Activated T-helper 2 cell treated with anti-CD3 and anti-CD28 coated beads, Interferon-gamma antibody, Interleukin-2, Interleukin-4, amounts not matched to agents 10 μg/mL and 5 μg/mL and 100 μg/mL, durations not matched to agents 14 hours and 24 hours and 36 hours (primary cell): ENCODE measurements at regions of chr12 and their contacts with region 1.

Region 1: DNA sequence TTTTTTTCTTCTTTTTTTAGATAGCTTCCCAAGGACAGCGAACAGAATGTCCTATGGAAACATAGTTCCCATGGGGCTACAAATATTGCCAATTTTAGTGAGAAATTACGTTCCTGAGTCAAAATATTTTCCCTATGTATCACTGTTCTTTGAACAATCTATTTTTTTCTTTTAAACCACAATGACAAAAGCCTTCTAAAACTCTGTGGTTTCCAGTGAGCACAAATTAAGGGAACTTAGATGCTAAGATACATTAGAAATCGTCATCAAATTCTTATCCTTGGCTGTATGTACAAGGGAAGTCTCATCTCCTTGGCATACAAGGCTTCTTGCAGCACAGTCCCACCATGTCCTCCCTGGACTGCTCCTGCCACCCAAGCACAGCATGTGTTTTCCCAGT is 17.9 kb downstream of the CPM start:
- DNase-seq: no peak
- H3K4me3 Mint-ChIP-seq: no peak overlapping the region
- H3K27ac Mint-ChIP-seq: peak overlapping the region; percentile 79
- H3K4me1 Mint-ChIP-seq: peaks cover 36% of the 10 kb centered on the region
- H3K27me3 Mint-ChIP-seq: no peaks in the 10 kb centered on the region

Region 2: DNA sequence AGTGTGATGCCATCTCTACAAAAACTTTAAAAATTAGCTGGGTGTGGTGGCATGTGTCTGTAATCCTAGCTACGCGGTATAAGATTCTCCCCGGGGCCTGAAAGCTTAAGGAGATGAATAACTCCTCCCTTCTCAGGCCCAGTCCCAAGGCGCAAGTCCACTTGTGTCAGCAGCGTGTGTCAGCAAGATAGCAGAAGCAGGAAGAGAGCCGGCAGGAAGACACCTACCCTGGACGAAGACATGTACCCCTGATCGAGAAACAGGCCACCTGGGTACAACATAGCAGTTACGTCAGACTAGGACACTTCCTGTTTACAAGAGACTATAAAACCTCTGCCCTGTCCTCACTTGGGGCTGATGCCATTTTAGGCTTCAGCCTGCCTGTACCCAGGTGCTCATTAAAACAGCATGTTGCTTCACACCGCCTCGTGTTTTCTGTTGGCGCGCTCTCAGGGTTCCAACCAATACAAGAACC is 25.4 kb before region 1 on chr12:
- intact Hi-C with region 1: loop called (anchors 1 kb)
- DNase-seq: no peak
- H3K4me3 Mint-ChIP-seq: no peak overlapping the region
- H3K27ac Mint-ChIP-seq: peak overlapping the region; percentile 13
- H3K4me1 Mint-ChIP-seq: peaks cover 53% of the 10 kb centered on the region
- H3K27me3 Mint-ChIP-seq: no peaks in the 10 kb centered on the region

Region 3: DNA sequence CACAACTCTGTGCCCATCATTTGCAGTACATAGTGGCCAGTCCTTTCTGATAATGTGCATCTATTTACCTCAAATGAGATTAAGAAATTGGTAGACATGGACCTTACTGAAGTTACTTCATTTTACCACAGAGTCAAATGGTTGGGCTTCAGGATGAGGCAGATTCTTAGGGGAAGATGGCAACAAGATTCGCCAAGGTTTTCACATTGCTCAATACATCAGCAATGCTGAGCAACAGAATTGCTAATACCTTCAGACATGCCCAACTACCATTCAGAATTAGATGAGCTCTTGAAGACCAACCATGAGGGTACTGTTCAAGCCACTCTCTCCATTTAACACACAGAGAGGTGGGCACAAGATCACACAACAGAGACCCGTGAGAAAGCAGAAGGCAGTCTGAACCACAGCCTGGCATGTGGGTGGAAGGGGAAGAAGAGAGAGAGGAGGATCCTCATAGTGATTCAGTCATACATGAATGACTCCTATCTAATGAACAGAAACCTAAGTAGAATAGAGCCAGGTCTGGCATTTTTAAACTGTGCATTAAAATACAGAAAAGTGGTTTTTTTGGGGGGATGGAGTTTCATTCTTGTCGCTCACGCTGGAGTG is 10.6 kb before region 1 on chr12:
- intact Hi-C with region 1: loop called (anchors 2 kb)
- DNase-seq: no peak
- H3K4me3 Mint-ChIP-seq: no peak overlapping the region
- H3K27ac Mint-ChIP-seq: no peak overlapping the region
- H3K4me1 Mint-ChIP-seq: peaks cover 23% of the 10 kb centered on the region
- H3K27me3 Mint-ChIP-seq: no peaks in the 10 kb centered on the region

Region 4: DNA sequence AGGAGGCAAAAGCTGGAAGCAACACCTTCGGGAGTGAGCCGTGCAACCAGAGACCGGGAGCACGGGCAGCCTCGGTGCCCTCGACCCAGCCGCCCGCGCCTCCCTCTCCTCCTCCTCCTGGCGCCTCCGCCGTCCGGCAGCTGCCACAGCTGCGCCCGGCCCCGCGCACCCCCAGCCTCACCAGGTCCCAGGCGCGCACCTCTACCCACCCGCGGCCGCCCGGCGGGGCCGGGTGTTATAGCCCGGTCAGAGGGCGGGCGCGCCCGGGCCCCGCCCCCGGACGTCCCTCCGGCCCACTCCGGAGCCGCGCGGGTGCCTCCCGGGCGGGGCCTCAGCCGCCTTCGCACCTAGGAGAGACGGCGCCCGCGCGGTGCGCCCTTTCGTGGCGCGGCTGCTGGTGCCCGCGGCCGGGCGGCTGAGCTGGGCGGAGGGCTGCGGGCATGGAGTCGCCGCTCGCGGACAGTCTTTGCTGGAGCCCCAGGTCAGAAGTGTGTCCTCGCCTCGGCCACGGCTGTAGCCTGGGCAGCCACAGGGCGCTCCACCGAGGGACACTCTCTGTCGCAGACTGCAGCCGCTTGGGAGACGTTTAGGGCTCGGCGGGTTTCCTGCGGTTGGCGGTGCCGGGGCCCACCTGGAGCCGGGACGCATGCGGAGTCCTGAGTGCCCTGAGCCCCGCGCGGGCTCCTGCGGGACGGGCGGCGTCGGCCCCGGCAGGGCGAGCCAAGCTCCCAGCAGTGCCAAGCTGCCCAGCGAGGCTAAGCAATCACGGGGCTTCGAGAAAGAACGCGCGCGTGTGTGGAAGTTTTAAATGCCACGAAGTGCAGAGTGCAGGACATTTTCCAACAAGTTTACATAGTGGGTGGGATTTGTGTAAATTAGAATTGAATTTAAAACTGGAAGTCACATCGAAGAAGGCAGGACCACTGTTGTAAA is 18.2 kb after region 1 on chr12 and contains the start of gene CPM:
- intact Hi-C with region 1: loop called (anchors 1 kb)
- DNase-seq: peak; percentile 80
- H3K4me3 Mint-ChIP-seq: peak within 1 kb of the TSS; percentile 96
- H3K27ac Mint-ChIP-seq: peak within 1 kb of the TSS; percentile 84
- H3K4me1 Mint-ChIP-seq: peaks cover 29% of the 10 kb centered on the region
- H3K27me3 Mint-ChIP-seq: no peaks in the 10 kb centered on the region
- total RNA-seq, gene CPM: 48.1 and 49.7 TPM in 2 replicates

Region 5: DNA sequence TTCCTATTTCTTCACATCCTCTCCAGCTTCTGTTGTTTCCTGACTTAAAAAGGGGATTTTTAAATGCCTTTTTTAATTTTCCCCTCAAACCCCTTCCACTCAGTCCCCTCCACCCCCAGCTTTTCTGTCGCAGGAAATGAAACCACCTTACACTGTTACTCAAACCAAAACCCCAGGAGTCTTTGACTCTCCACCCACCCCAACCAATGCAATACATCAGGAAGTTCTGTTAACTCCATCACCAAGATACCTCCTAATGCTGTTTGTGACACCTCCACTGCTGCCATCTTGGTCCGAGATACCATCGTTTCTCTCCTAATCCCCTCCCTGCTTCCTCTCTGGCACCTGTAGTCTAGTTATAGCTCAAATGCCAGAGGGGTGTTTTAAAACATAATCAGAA is 43.3 kb after region 1 on chr12:
- intact Hi-C with region 1: loop called (anchors 1 kb)
- DNase-seq: peak; percentile 38
- H3K4me3 Mint-ChIP-seq: peak overlapping the region; percentile 3
- H3K27ac Mint-ChIP-seq: peak overlapping the region; percentile 89
- H3K4me1 Mint-ChIP-seq: peaks cover 45% of the 10 kb centered on the region
- H3K27me3 Mint-ChIP-seq: no peaks in the 10 kb centered on the region

Region 6: DNA sequence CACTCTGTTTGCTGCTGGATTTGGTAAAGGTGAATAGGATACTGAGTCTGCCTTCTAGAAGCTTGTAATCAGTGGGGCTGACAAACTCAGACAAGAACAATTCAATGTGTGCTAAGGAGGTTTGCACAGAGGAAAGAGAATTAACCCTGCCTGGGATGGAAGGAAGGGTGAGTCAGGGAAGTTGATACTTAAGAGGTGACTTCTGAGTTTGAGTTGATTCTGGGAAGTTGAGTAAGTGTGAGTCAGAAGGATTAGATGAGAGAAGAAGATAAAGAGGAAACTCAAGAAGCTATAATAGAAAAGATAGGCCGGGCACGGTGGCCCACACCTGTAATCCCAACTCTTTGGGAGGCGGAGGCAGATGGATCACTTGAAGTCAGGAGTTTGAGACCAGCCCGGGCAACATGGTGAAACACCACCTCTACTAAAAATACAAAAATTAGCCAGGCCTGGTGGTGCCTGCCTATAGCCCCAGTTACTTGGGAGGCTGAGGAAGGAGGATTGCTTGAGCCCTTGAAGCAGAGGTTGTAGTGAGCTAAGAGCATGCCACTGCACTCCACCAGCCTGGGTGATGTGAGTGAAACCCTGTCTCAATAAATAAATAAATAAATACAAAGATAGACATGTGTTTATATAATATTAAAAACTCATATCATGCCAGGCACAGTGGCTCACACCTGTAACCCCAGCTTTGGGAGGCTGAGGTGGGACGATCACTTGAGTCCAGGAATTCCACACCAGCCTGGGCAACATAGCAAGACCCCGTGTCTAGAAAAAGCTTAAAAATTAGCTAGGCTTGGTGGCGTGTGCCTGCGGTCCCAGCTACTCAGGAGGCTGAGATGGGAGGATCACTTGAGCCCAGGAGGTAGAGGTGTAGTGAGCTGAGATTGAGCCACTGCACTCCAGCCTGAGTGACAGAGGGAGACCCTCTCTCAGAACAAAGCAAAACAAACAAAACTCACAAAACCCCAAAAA is 144.7 kb after region 1 on chr12:
- intact Hi-C with region 1: loop called (anchors 2 kb)
- DNase-seq: no peak
- H3K4me3 Mint-ChIP-seq: no peak overlapping the region
- H3K27ac Mint-ChIP-seq: peak overlapping the region; percentile 36
- H3K4me1 Mint-ChIP-seq: peaks cover 27% of the 10 kb centered on the region
- H3K27me3 Mint-ChIP-seq: no peaks in the 10 kb centered on the region